Natural killer cell (primary cell): ENCODE measurements at regions of chr2 and their contacts with region 1.

Region 1: GRCh38 chr2:202429164-202429980 is 53.2 kb downstream of the BMPR2 start:
- DNase-seq: no peak
- ATAC-seq: no peak
- H3K4me3 ChIP-seq: no peak overlapping the region
- H3K4me3 Mint-ChIP-seq: no peak overlapping the region
- H3K27ac ChIP-seq: no peak overlapping the region
- H3K27ac Mint-ChIP-seq: no peak overlapping the region
- H3K4me1 ChIP-seq: no peaks in the 10 kb centered on the region
- H3K4me1 Mint-ChIP-seq: peaks cover 16 to 20% of the 10 kb centered on the region in 2 donors
- H3K27me3 ChIP-seq: no peaks in the 10 kb centered on the region
- H3K27me3 Mint-ChIP-seq: no peaks in the 10 kb centered on the region
- CTCF ChIP-seq: no peak

Region 2: GRCh38 chr2:202450785-202451184 is 21.4 kb after region 1 on chr2:
- intact Hi-C with region 1: loop called (anchors 1 kb)
- DNase-seq: no peak
- ATAC-seq: no peak
- H3K4me3 ChIP-seq: no peak overlapping the region
- H3K4me3 Mint-ChIP-seq: no peak overlapping the region
- H3K27ac ChIP-seq: no peak overlapping the region
- H3K27ac Mint-ChIP-seq: no peak overlapping the region
- H3K4me1 ChIP-seq: no peaks in the 10 kb centered on the region
- H3K4me1 Mint-ChIP-seq: peaks cover 0 to 11% of the 10 kb centered on the region in 2 donors
- H3K27me3 ChIP-seq: no peaks in the 10 kb centered on the region
- H3K27me3 Mint-ChIP-seq: no peaks in the 10 kb centered on the region
- CTCF ChIP-seq: no peak